Thyroid gland (tissue), 4 donors: ENCODE measurements at regions of chr4 and their contacts with region 1.

Region 1: GRCh38 chr4:76305971-76306881 is at the start of gene STBD1:
- DNase-seq: peak; percentile 75 to 83
- H3K4me3 ChIP-seq: peak within 1 kb of the TSS; percentile 46 to 92 (median 78)
- H3K27ac ChIP-seq: peak within 1 kb of the TSS; percentile 15 to 60 (median 43)
- H3K4me1 ChIP-seq: peaks cover 3 to 6% of the 10 kb centered on the region in 2 donors
- H3K27me3 ChIP-seq: no peaks in the 10 kb centered on the region
- CTCF ChIP-seq: no peak
- POLR2A ChIP-seq: peak in 1 of 2 donors; percentile 38
- total RNA-seq, gene STBD1: 1.0 to 2.5 (median 1.4) TPM

Region 2: GRCh38 chr4:76179398-76180318 is 126.6 kb before region 1 on chr4:
- intact Hi-C with region 1: loop called (anchors 10 kb)
- DNase-seq: peak; percentile 88 to 92
- H3K4me3 ChIP-seq: no peak overlapping the region
- H3K27ac ChIP-seq: no peak overlapping the region
- H3K4me1 ChIP-seq: peaks cover 0 to 4% of the 10 kb centered on the region in 2 donors
- H3K27me3 ChIP-seq: no peaks in the 10 kb centered on the region
- CTCF ChIP-seq: peak; percentile 68 to 95 (median 84)
- POLR2A ChIP-seq: no peak

Region 3: GRCh38 chr4:76526585-76526990 is 220.4 kb after region 1 on chr4:
- intact Hi-C with region 1: no loop called
- DNase-seq: peak in 1 of 2 donors; percentile 7
- H3K4me3 ChIP-seq: no peak overlapping the region
- H3K27ac ChIP-seq: peak overlapping the region in 2 of 3 donors; percentile 19 to 68
- H3K4me1 ChIP-seq: peaks cover 6 to 10% of the 10 kb centered on the region in 2 donors
- H3K27me3 ChIP-seq: no peaks in the 10 kb centered on the region
- CTCF ChIP-seq: no peak
- POLR2A ChIP-seq: peak in 1 of 2 donors; percentile 6